Left colon (tissue), 2 donors: ENCODE measurements at regions of chr4 and their contacts with region 1.

Region 1: DNA sequence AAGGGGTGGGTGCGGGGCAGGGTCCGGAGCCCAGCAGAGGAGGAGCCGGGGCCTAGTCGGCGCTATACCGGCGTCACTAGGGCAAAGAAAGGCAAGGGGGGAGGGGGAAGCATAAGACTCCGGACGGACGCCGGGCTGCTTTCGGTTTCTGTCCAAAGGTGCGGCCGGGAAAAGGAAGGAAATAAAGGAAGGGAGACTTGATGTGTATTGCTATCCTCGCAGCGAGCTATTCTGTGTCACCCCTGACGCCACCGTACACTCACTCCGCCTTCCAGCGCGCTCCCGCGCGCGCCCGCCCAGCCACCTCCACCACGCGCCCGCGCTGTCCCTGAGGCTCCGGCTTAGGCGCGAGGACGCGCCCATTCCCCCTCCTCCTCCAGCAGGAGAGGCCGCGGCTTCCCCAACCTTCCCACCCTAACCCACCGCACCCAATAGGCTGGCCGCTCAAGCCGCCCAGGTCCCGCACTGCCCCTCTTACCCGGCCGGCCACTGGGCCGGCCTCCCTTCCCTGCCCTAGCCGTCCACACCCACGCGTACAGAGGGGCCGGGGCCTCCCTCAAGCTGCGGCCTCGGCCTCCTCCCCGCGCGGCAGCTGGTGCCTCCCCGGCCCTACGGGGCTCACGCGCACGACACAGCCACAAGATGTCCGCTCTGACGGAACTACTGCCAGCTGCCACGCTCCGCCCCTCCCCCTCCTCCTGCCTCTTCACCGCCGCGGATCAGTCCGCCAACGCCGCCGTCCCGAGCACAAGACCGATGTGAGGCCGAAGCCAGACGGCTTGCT is at the start of gene UBE2D3:
- DNase-seq: peak; percentile 94 to 96
- ATAC-seq: peak; percentile 66
- total RNA-seq, gene UBE2D3: 289 to 296 TPM

Region 2: GRCh38 chr4:102868781-102869568 is 41.9 kb after region 1 on chr4 and contains the start of gene CISD2:
- intact Hi-C with region 1: loop called in 1 of 2 experiments (anchors 5 kb)
- DNase-seq: peak; percentile 92 to 93
- ATAC-seq: peak; percentile 96
- total RNA-seq, gene CISD2: 24.1 TPM

Region 3: GRCh38 chr4:102935716-102936115 is 108.6 kb after region 1 on chr4:
- intact Hi-C with region 1: no loop called
- DNase-seq: no peak
- ATAC-seq: no peak